Heart right ventricle (tissue), 16 donors: ENCODE measurements at regions of chr20 and their contacts with region 1.

Region 1: GRCh38 chr20:20549718-20550117 is 162.7 kb downstream of the RALGAPA2 start:
- DNase-seq: no peak
- ATAC-seq: no peak
- H3K4me3 ChIP-seq: no peak overlapping the region
- H3K27ac ChIP-seq: no peak overlapping the region
- H3K4me1 ChIP-seq: no peaks in the 10 kb centered on the region
- H3K27me3 ChIP-seq: no peaks in the 10 kb centered on the region
- CTCF ChIP-seq: no peak

Region 2: DNA sequence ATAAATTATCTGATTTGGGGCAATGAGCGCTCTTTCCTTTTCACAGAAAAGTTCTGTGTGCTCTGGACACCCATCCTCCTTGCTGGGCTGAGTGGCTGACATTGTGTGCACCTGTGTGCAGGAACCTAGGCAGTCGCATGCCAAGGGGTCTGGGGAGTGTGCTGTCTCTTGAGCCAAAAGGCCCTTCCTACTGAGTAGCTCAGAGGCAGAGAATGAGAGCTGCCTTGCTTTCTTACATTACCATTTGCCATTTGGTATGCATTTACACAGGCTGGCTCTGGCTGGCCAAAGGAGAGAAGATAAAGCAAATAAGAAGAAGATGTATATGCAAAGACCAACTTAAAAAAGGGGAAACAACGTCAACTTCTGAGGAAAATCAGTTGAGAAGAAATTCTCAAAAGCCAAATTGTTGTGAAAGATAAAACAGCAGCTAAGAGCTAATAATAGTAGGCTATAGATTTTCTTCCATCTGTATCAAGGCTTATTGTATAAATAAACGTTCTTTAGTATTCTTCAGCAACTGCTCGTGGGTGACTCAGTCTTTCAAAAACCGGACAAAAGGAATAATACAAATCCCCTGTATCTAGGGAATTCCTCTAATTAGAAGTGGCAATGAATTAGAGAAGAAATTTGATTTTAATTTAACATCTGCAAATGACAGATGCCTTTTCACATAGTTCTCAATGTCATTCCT is 59.9 kb before region 1 on chr20:
- intact Hi-C with region 1: loop called in 1 of 10 experiments (anchors 10 kb)
- DNase-seq: no peak
- ATAC-seq: no peak
- H3K4me3 ChIP-seq: no peak overlapping the region
- H3K27ac ChIP-seq: no peak overlapping the region
- H3K4me1 ChIP-seq: no peaks in the 10 kb centered on the region
- H3K27me3 ChIP-seq: no peaks in the 10 kb centered on the region
- CTCF ChIP-seq: no peak